CD4-positive, alpha-beta T cell (primary cell): ENCODE measurements at regions of chr2 and their contacts with region 1.

Region 1: DNA sequence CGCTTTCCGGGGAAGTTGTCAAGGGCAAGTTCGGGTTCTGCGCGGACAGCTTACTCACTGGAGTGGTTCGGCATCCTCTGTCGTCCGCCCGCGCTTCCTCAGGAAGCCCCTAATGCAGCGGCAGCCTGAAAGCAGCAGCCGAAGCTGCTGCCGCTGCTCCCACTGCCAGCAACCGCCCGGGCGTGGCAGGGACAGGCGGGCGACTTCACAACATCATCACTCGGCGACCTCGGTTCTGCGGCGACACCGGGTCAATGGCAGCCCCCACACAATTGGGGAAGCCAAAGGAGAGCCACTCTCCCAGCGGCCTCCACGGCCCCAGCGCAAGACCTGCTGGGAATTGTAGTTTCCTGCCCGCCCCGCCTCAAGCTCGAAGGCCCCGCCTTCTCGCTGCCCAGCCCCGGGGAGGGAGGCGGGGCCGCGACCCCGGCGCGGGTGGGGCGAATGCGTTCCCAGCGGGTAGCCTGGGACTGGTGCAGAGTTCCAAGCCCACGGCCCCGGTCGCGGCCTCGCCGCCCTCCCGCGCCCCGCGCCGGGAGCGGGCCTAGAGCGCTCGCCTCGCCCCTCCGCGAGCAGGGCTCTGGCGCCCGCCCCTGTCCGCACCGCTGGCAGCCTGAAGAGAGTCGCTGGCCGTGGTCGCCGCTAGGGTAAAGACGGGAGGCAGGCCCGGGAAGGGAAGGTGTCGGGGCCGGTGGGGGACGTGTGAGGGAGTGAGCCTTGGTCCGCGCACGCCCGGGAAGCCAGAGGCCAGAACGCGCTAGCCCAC is at the starts of genes STRADB and TRAK2:
- DNase-seq: peak; percentile 87 to 98 (median 92)
- ATAC-seq: peak; percentile 84
- H3K4me3 ChIP-seq: peak within 1 kb of the TSS; percentile 90
- H3K4me3 Mint-ChIP-seq: peak within 1 kb of the TSS; percentile 97
- H3K27ac ChIP-seq: peak within 1 kb of the TSS; percentile 83 to 85
- H3K27ac Mint-ChIP-seq: peak within 1 kb of the TSS; percentile 98
- H3K4me1 ChIP-seq: peaks cover 44% of the 10 kb centered on the region
- H3K4me1 Mint-ChIP-seq: peaks cover 61% of the 10 kb centered on the region
- H3K27me3 ChIP-seq: no peaks in the 10 kb centered on the region
- H3K27me3 Mint-ChIP-seq: no peaks in the 10 kb centered on the region
- CTCF ChIP-seq: no peak
- total RNA-seq, gene STRADB: 4.2 to 5.6 TPM
- total RNA-seq, gene TRAK2: 32.5 to 35.6 TPM

Region 2: GRCh38 chr2:200864176-200864976 is 587.1 kb before region 1 on chr2 and contains the start of gene CLK1:
- CTCF ChIA-PET with region 1: no interaction called
- POLR2A ChIA-PET with region 1: interaction called, 12 read pairs
- intact Hi-C with region 1: loop called in 1 of 2 experiments (anchors 10 kb)
- DNase-seq: peak; percentile 95 to 98 (median 97)
- ATAC-seq: peak; percentile 75
- H3K4me3 ChIP-seq: peak within 1 kb of the TSS; percentile 96
- H3K4me3 Mint-ChIP-seq: peak within 1 kb of the TSS; percentile 97
- H3K27ac ChIP-seq: peak within 1 kb of the TSS; percentile 100
- H3K27ac Mint-ChIP-seq: peak within 1 kb of the TSS; percentile 88
- H3K4me1 ChIP-seq: peaks cover 26% of the 10 kb centered on the region
- H3K4me1 Mint-ChIP-seq: peaks cover 48% of the 10 kb centered on the region
- H3K27me3 ChIP-seq: no peaks in the 10 kb centered on the region
- H3K27me3 Mint-ChIP-seq: peaks cover 4% of the 10 kb centered on the region
- CTCF ChIP-seq: no peak
- total RNA-seq, gene CLK1: 1,228 to 1,235 TPM

Region 3: GRCh38 chr2:201257956-201258665 is 193.4 kb before region 1 on chr2:
- CTCF ChIA-PET with region 1: no interaction called
- POLR2A ChIA-PET with region 1: interaction called, 5 read pairs
- intact Hi-C with region 1: loop called in 1 of 2 experiments (anchors 5 kb)
- DNase-seq: peak; percentile 90 to 99 (median 95)
- ATAC-seq: peak; percentile 71
- H3K4me3 ChIP-seq: peak overlapping the region; percentile 62
- H3K4me3 Mint-ChIP-seq: peak overlapping the region; percentile 89
- H3K27ac ChIP-seq: peak overlapping the region; percentile 93 to 100
- H3K27ac Mint-ChIP-seq: peak overlapping the region; percentile 97
- H3K4me1 ChIP-seq: peaks cover 74% of the 10 kb centered on the region
- H3K4me1 Mint-ChIP-seq: peaks cover 75% of the 10 kb centered on the region
- H3K27me3 ChIP-seq: no peaks in the 10 kb centered on the region
- H3K27me3 Mint-ChIP-seq: no peaks in the 10 kb centered on the region
- CTCF ChIP-seq: no peak

Region 4: DNA sequence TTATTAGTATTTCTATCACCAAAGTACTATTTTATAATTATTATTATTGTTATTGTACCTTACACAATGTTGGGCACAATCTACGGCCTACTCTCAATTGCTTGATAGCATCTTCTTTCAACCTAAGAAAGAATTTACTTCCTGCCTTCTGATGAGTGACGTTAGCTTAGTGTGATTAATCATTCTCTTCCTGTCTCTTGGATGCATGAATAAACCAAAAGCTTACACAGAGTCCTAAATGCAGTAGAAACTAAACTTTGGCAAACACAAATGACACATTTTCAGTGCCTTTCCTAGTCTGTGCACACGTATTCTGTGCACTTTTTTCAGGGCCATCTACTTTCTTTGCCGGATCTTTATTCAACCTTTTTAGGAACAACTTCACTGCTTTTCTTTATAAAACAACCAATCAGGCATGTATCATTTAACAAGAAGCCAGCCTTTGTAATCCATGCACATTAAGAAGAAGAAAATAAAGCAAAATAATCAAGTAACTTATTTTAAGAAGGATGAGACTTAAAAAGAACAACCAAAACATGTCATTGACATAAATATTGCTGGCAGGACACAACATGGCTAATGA is 19.3 kb before region 1 on chr2:
- CTCF ChIA-PET with region 1: interaction called, 28 read pairs
- POLR2A ChIA-PET with region 1: interaction called, 48 read pairs
- intact Hi-C with region 1: loop called in 1 of 2 experiments (anchors 2 kb)
- DNase-seq: peak in 3 of 14 experiments; percentile 55 to 75 (median 59)
- ATAC-seq: peak; percentile 95
- H3K4me3 ChIP-seq: no peak overlapping the region
- H3K4me3 Mint-ChIP-seq: peak overlapping the region; percentile 59
- H3K27ac ChIP-seq: peak overlapping the region; percentile 13 to 57
- H3K27ac Mint-ChIP-seq: peak overlapping the region; percentile 88
- H3K4me1 ChIP-seq: peaks cover 25% of the 10 kb centered on the region
- H3K4me1 Mint-ChIP-seq: peaks cover 71% of the 10 kb centered on the region
- H3K27me3 ChIP-seq: no peaks in the 10 kb centered on the region
- H3K27me3 Mint-ChIP-seq: no peaks in the 10 kb centered on the region
- CTCF ChIP-seq: no peak

Region 5: DNA sequence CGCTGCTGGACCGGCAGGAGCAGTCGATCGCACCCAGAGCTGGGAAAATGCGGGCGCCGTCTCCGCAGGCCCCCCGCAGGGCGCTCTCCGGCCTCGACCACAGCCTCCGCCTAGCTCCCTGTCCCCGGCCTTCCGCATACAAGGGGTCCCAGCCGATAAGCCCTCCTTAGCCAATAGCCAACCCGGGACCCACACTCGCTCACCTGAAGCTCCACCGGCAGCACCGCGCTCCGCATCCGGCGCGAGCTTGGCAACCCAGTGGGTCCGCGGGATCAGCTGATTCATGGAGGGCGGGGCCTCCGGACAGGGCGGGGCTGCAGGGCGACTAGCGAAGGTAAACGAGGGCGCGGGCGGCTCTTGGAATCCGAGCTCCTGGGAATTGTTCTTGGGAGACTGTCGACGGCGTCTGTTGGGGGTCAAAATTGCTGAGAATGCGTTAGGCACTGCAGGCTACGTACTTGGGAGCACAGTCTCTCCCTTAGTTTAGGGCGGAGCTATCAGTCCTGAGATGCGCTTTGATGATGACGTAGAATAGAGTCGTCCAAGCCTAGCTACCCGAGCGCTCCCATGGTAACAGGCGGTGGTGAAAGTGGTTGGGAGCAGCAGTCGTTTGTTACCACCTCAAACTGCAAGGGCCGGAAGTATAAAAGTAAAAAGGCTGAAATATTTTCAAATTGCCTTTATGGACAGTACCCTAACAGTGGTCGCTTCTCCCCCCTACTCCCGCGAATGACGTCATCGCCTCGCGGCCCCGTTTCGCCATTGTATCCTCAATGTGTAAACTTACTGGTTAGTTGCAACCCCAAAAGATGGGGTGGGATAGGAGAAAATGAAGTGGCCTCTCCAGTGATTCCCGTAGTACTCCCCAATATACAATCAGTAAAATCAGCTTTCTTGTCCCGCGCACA is 329.5 kb after region 1 on chr2 and contains the start of gene ALS2:
- CTCF ChIA-PET with region 1: no interaction called
- POLR2A ChIA-PET with region 1: interaction called, 21 read pairs
- intact Hi-C with region 1: loop called (anchors 2 to 5 kb)
- DNase-seq: peak; percentile 86 to 96 (median 92)
- ATAC-seq: peak; percentile 90
- H3K4me3 ChIP-seq: peak within 1 kb of the TSS; percentile 66
- H3K4me3 Mint-ChIP-seq: peak within 1 kb of the TSS; percentile 98
- H3K27ac ChIP-seq: peak within 1 kb of the TSS; percentile 77 to 88
- H3K27ac Mint-ChIP-seq: peak within 1 kb of the TSS; percentile 93
- H3K4me1 ChIP-seq: peaks cover 15% of the 10 kb centered on the region
- H3K4me1 Mint-ChIP-seq: peaks cover 20% of the 10 kb centered on the region
- H3K27me3 ChIP-seq: no peaks in the 10 kb centered on the region
- H3K27me3 Mint-ChIP-seq: no peaks in the 10 kb centered on the region
- CTCF ChIP-seq: no peak
- total RNA-seq, gene ALS2: 7.0 to 7.2 TPM

Region 6: GRCh38 chr2:203014456-203015199 is 1563.2 kb after region 1 on chr2 and contains the start of gene NBEAL1:
- CTCF ChIA-PET with region 1: no interaction called
- POLR2A ChIA-PET with region 1: no interaction called
- intact Hi-C with region 1: loop called in 1 of 2 experiments (anchors 10 kb)
- DNase-seq: peak; percentile 86 to 99 (median 94)
- ATAC-seq: peak; percentile 87
- H3K4me3 ChIP-seq: peak within 1 kb of the TSS; percentile 88
- H3K4me3 Mint-ChIP-seq: peak within 1 kb of the TSS; percentile 93
- H3K27ac ChIP-seq: peak within 1 kb of the TSS; percentile 64 to 86
- H3K27ac Mint-ChIP-seq: peak within 1 kb of the TSS; percentile 93
- H3K4me1 ChIP-seq: peaks cover 15% of the 10 kb centered on the region
- H3K4me1 Mint-ChIP-seq: peaks cover 50% of the 10 kb centered on the region
- H3K27me3 ChIP-seq: no peaks in the 10 kb centered on the region
- H3K27me3 Mint-ChIP-seq: no peaks in the 10 kb centered on the region
- CTCF ChIP-seq: no peak
- total RNA-seq, gene NBEAL1: 8.3 to 11.2 TPM